Activated CD8-positive, alpha-beta T cell treated with anti-CD3 and anti-CD28 coated beads for 36 hours (primary cell): ENCODE measurements at regions of chr18 and their contacts with region 1.

Region 1: GRCh38 chr18:21111341-21112139 is at the start of gene ROCK1:
- DNase-seq: peak; percentile 99
- ATAC-seq: peak; percentile 85
- H3K4me3 Mint-ChIP-seq: no peak within 1 kb of the TSS
- H3K27ac Mint-ChIP-seq: peak within 1 kb of the TSS; percentile 98
- H3K4me1 Mint-ChIP-seq: peaks cover 3% of the 10 kb centered on the region
- H3K27me3 Mint-ChIP-seq: no peaks in the 10 kb centered on the region
- CTCF ChIP-seq: no peak
- total RNA-seq, gene ROCK1: 45.6 to 49.4 TPM

Region 2: DNA sequence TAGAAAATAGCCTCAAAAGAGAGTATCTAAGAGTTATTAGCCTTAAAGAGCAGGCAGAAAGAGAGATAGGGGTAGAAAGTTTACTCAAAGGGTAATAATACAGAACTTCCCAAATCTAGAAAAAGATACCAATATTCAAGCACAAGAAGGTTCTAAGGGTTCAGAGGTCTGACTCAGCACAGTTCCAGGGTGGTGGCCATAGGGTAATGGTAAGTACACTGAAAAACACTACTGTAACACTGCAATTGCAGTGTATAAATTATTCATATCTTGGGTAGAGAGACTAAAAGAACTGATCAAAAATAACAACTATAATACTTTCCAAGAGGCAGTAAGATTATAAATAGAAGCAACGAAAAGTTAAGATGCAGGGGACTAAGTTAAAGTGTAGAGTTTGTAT is 115.1 kb before region 1 on chr18:
- CTCF ChIA-PET with region 1: no interaction called
- POLR2A ChIA-PET with region 1: no interaction called
- intact Hi-C with region 1: loop called (anchors 10 kb)
- DNase-seq: no peak
- ATAC-seq: no peak
- H3K4me3 Mint-ChIP-seq: no peak overlapping the region
- H3K27ac Mint-ChIP-seq: no peak overlapping the region
- H3K4me1 Mint-ChIP-seq: peaks cover 19% of the 10 kb centered on the region
- H3K27me3 Mint-ChIP-seq: no peaks in the 10 kb centered on the region
- CTCF ChIP-seq: no peak

Region 3: GRCh38 chr18:21040466-21040865 is 71.1 kb before region 1 on chr18:
- CTCF ChIA-PET with region 1: no interaction called
- POLR2A ChIA-PET with region 1: no interaction called
- intact Hi-C with region 1: loop called (anchors 5 kb)
- DNase-seq: no peak
- ATAC-seq: no peak
- H3K4me3 Mint-ChIP-seq: no peak overlapping the region
- H3K27ac Mint-ChIP-seq: no peak overlapping the region
- H3K4me1 Mint-ChIP-seq: peaks cover 3% of the 10 kb centered on the region
- H3K27me3 Mint-ChIP-seq: no peaks in the 10 kb centered on the region
- CTCF ChIP-seq: no peak

Region 4: GRCh38 chr18:21074336-21075323 is 36.9 kb before region 1 on chr18:
- CTCF ChIA-PET with region 1: no interaction called
- POLR2A ChIA-PET with region 1: interaction called, 5 read pairs
- intact Hi-C with region 1: loop called (anchors 5 kb)
- DNase-seq: no peak
- ATAC-seq: no peak
- H3K4me3 Mint-ChIP-seq: no peak overlapping the region
- H3K27ac Mint-ChIP-seq: peak overlapping the region; percentile 27
- H3K4me1 Mint-ChIP-seq: peaks cover 66% of the 10 kb centered on the region
- H3K27me3 Mint-ChIP-seq: no peaks in the 10 kb centered on the region
- CTCF ChIP-seq: no peak

Region 5: DNA sequence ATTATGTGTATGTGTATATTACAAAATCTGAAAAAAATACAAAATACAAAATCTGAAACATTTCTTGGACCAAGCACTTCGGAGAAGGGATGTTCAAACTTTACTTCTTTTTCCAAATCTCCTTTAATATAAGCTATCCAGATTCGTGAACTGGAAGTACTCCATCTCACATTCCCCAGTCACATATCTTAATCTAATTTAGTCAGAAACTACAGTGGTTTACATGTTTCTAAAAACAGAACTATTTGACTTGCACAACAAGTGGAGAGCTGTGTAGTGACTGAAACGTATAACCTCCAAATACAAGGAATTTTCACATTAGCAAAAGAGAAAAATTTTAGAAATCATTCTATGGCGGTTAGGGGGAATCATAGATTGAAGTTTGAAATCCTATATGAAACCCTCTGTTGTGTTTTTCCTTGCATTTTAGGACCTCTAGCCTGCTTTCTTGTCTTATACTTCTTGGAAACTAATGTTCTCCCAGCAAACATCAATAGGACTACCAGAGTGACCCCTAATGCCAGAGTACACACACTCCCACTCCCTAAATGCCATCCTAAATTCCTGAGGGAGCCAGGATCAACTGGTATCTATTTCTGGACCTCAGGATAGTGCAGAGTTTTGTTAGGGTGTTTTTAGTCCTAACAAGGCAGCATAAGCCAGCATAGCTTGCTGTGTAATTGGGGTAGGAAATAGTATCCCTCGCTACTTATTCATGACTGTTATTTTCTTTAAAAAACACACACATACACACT is 30.3 kb after region 1 on chr18:
- CTCF ChIA-PET with region 1: no interaction called
- POLR2A ChIA-PET with region 1: no interaction called
- intact Hi-C with region 1: no loop called
- DNase-seq: no peak
- ATAC-seq: no peak
- H3K4me3 Mint-ChIP-seq: no peak overlapping the region
- H3K27ac Mint-ChIP-seq: no peak overlapping the region
- H3K4me1 Mint-ChIP-seq: no peaks in the 10 kb centered on the region
- H3K27me3 Mint-ChIP-seq: peaks cover 2% of the 10 kb centered on the region
- CTCF ChIP-seq: no peak

Region 6: DNA sequence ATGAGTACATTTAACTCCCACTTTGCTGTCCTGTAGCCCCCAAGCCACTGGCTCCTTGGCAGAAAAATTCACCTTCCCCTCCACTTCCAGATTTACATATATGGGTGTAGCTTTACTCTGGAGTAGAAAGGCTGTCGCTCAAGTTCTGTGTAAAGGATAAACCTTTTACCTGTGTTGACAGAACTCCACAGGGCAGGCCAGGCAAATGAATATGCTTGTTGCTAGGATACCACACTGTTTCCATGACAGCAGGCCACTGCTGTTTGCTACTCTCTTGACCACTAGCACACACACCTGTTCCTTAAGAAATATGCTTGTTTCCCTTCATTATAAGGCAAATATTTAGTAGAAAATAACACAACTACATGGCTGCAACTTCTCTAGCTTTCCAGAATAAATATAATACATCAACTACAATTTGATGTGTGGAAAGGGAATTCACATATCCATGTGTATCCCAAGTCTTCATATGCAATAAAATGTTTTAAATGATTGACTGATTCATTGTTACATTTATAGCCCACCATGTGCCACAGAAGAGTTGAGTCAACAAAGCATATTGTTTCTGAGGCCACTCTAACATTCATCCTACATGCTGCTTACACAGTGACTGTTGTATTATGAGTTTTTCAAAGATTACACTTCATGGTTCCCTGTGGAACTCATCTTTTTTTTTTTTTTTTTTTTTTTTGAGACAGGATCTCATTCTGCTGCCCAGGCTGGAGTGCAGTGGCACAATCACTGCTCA is 56.3 kb after region 1 on chr18:
- CTCF ChIA-PET with region 1: no interaction called
- POLR2A ChIA-PET with region 1: no interaction called
- intact Hi-C with region 1: no loop called
- DNase-seq: no peak
- ATAC-seq: no peak
- H3K4me3 Mint-ChIP-seq: no peak overlapping the region
- H3K27ac Mint-ChIP-seq: no peak overlapping the region
- H3K4me1 Mint-ChIP-seq: no peaks in the 10 kb centered on the region
- H3K27me3 Mint-ChIP-seq: peaks cover 6% of the 10 kb centered on the region
- CTCF ChIP-seq: no peak

Region 7: GRCh38 chr18:21303913-21304312 is 192.4 kb after region 1 on chr18:
- CTCF ChIA-PET with region 1: no interaction called
- POLR2A ChIA-PET with region 1: no interaction called
- intact Hi-C with region 1: no loop called
- DNase-seq: no peak
- ATAC-seq: no peak
- H3K4me3 Mint-ChIP-seq: no peak overlapping the region
- H3K27ac Mint-ChIP-seq: no peak overlapping the region
- H3K4me1 Mint-ChIP-seq: no peaks in the 10 kb centered on the region
- H3K27me3 Mint-ChIP-seq: peaks cover 12% of the 10 kb centered on the region
- CTCF ChIP-seq: no peak

Region 8: DNA sequence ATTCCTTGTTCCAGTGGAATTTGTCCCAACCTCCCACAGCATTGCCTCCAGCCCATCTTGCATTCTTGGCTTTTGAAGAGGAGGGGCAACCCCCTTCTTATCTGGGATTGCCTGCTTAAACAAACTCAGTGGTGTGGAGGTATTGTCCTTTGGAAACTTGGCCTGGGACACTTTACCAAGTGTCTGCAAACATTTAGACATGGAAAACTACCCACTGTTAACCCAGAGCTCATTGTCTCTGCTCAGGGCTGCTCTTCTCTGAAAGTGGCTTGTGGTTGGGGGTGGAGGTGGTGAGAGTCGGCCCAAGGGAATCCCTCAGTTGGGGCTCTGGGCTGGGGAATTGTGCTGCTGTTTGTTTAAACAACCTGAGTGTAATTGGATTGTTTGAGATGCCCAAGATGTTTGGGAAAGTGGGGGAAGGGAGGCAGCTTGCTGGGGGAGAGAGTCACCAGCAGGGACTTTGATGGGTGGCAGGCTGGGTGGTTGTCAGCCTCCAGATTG is 879.6 kb after region 1 on chr18:
- CTCF ChIA-PET with region 1: no interaction called
- POLR2A ChIA-PET with region 1: no interaction called
- intact Hi-C with region 1: no loop called
- DNase-seq: no peak
- ATAC-seq: no peak
- H3K4me3 Mint-ChIP-seq: no peak overlapping the region
- H3K27ac Mint-ChIP-seq: no peak overlapping the region
- H3K4me1 Mint-ChIP-seq: no peaks in the 10 kb centered on the region
- H3K27me3 Mint-ChIP-seq: peaks cover 2% of the 10 kb centered on the region
- CTCF ChIP-seq: no peak